Mammary epithelial cell (primary cell): ENCODE measurements at regions of chr11 and their contacts with region 1.

Region 1: GRCh38 chr11:118290923-118291322 is 13.6 kb upstream of the CD3E start:
- DNase-seq: peak; percentile 63
- H3K4me3 ChIP-seq: no peak overlapping the region
- H3K27ac ChIP-seq: no peak overlapping the region
- H3K4me1 ChIP-seq: peaks cover 30% of the 10 kb centered on the region
- H3K27me3 ChIP-seq: no peaks in the 10 kb centered on the region
- CTCF ChIP-seq: peak; percentile 67 to 68

Region 2: GRCh38 chr11:117716521-117717440 is 574.1 kb before region 1 on chr11:
- CTCF ChIA-PET with region 1: no interaction called
- dilution Hi-C with region 1: no loop called
- in situ Hi-C with region 1: no loop called
- intact Hi-C with region 1: no loop called
- DNase-seq: no peak
- H3K4me3 ChIP-seq: no peak overlapping the region
- H3K27ac ChIP-seq: no peak overlapping the region
- H3K4me1 ChIP-seq: no peaks in the 10 kb centered on the region
- H3K27me3 ChIP-seq: no peaks in the 10 kb centered on the region
- CTCF ChIP-seq: no peak

Region 3: DNA sequence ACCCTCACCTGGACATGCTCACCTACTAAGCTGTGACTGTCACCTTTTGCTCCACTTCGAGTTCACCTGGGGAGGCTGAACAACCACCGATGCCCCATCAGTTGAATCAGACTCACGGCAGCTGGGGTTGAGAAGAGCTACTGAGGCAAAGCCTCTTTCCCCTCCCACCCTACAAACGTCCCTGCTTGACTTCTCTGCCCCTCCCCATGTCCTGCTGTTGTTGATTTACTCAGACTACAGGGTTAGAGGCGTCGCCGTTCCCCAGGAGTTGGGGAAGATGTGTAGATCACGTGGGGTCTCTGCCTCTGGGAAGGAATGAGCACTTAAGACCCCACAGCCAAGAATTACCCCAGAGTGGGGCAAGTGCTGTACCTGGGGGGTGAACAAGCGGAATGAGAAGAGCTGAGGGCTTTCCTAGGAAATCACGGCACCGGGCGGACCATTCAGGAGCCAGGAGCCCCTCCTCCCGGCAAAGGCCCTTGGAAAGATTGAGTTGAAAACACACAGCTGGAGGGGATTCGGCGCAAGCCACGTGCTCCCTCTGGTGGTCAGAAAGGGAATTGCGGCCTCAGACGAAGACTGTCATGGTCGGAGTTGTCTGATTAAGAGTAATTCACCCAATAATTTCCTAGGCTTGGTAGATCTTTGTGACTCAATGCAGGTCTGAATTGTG is 473.4 kb before region 1 on chr11:
- CTCF ChIA-PET with region 1: interaction called, 3 read pairs
- dilution Hi-C with region 1: no loop called
- in situ Hi-C with region 1: no loop called
- intact Hi-C with region 1: loop called (anchors 10 kb)
- DNase-seq: peak; percentile 63
- H3K4me3 ChIP-seq: no peak overlapping the region
- H3K27ac ChIP-seq: no peak overlapping the region
- H3K4me1 ChIP-seq: peaks cover 10% of the 10 kb centered on the region
- H3K27me3 ChIP-seq: no peaks in the 10 kb centered on the region
- CTCF ChIP-seq: peak; percentile 99 to 100

Region 4: GRCh38 chr11:117979481-117980211 is 311.3 kb before region 1 on chr11:
- CTCF ChIA-PET with region 1: no interaction called
- dilution Hi-C with region 1: no loop called
- in situ Hi-C with region 1: no loop called
- intact Hi-C with region 1: no loop called
- DNase-seq: no peak
- H3K4me3 ChIP-seq: no peak overlapping the region
- H3K27ac ChIP-seq: no peak overlapping the region
- H3K4me1 ChIP-seq: no peaks in the 10 kb centered on the region
- H3K27me3 ChIP-seq: no peaks in the 10 kb centered on the region
- CTCF ChIP-seq: no peak

Region 5: GRCh38 chr11:118171269-118172062 is 119.5 kb before region 1 on chr11:
- CTCF ChIA-PET with region 1: no interaction called
- dilution Hi-C with region 1: no loop called
- in situ Hi-C with region 1: no loop called
- intact Hi-C with region 1: loop called (anchors 1 kb)
- DNase-seq: peak; percentile 37
- H3K4me3 ChIP-seq: no peak overlapping the region
- H3K27ac ChIP-seq: no peak overlapping the region
- H3K4me1 ChIP-seq: peaks cover 23% of the 10 kb centered on the region
- H3K27me3 ChIP-seq: no peaks in the 10 kb centered on the region
- CTCF ChIP-seq: peak; percentile 64 to 91

Region 6: GRCh38 chr11:118251858-118252652 is 38.9 kb before region 1 on chr11 and contains the start of gene MPZL3:
- CTCF ChIA-PET with region 1: no interaction called
- dilution Hi-C with region 1: no loop called
- in situ Hi-C with region 1: no loop called
- intact Hi-C with region 1: loop called (anchors 2 kb)
- DNase-seq: peak; percentile 98
- H3K4me3 ChIP-seq: peak within 1 kb of the TSS; percentile 58 to 81 (median 64)
- H3K27ac ChIP-seq: peak within 1 kb of the TSS; percentile 96
- H3K4me1 ChIP-seq: no peaks in the 10 kb centered on the region
- H3K27me3 ChIP-seq: no peaks in the 10 kb centered on the region
- CTCF ChIP-seq: peak in 1 of 2 donors; percentile 22
- total RNA-seq, gene MPZL3: 10.9 to 25.7 TPM

Region 7: GRCh38 chr11:118263695-118264567 is 27.0 kb before region 1 on chr11 and contains the start of gene MPZL2:
- CTCF ChIA-PET with region 1: no interaction called
- dilution Hi-C with region 1: no loop called
- in situ Hi-C with region 1: no loop called
- intact Hi-C with region 1: loop called (anchors 1 kb)
- DNase-seq: peak; percentile 98
- H3K4me3 ChIP-seq: peak within 1 kb of the TSS; percentile 59 to 91 (median 78)
- H3K27ac ChIP-seq: peak within 1 kb of the TSS; percentile 96
- H3K4me1 ChIP-seq: peaks cover 48% of the 10 kb centered on the region
- H3K27me3 ChIP-seq: no peaks in the 10 kb centered on the region
- CTCF ChIP-seq: peak in 1 of 2 donors; percentile 39
- total RNA-seq, gene MPZL2: 82.5 to 92.3 TPM

Region 8: DNA sequence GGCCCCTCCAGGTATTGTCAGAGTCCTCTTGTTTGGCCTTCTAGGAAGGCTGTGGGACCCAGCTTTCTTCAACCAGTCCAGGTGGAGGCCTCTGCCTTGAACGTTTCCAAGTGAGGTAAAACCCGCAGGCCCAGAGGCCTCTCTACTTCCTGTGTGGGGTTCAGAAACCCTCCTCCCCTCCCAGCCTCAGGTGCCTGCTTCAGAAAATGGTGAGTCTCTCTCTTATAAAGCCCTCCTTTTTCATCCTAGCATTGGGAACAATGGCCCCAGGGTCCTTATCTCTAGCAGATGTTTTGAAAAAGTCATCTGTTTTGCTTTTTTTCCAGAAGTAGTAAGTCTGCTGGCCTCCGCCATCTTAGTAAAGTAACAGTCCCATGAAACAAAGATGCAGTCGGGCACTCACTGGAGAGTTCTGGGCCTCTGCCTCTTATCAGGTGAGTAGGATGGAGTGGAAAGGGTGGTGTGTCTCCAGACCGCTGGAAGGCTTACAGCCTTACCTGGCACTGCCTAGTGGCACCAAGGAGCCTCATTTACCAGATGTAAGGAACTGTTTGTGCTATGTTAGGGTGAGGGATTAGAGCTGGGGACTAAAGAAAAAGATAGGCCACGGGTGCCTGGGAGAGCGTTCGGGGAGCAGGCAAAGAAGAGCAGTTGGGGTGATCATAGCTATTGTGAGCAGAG is 13.8 kb after region 1 on chr11 and contains the start of gene CD3E:
- CTCF ChIA-PET with region 1: no interaction called
- dilution Hi-C with region 1: no loop called
- in situ Hi-C with region 1: no loop called
- intact Hi-C with region 1: no loop called
- DNase-seq: no peak
- H3K4me3 ChIP-seq: no peak within 1 kb of the TSS
- H3K27ac ChIP-seq: no peak within 1 kb of the TSS
- H3K4me1 ChIP-seq: no peaks in the 10 kb centered on the region
- H3K27me3 ChIP-seq: no peaks in the 10 kb centered on the region
- CTCF ChIP-seq: no peak
- total RNA-seq, gene CD3E: not detected

Region 9: GRCh38 chr11:118359295-118359958 is 68.5 kb after region 1 on chr11 and contains the start of gene UBE4A:
- CTCF ChIA-PET with region 1: no interaction called
- dilution Hi-C with region 1: no loop called
- in situ Hi-C with region 1: loop called (anchors 10 kb)
- intact Hi-C with region 1: no loop called
- DNase-seq: peak; percentile 83
- H3K4me3 ChIP-seq: peak within 1 kb of the TSS; percentile 81 to 98 (median 86)
- H3K27ac ChIP-seq: peak within 1 kb of the TSS; percentile 71
- H3K4me1 ChIP-seq: peaks cover 9% of the 10 kb centered on the region
- H3K27me3 ChIP-seq: no peaks in the 10 kb centered on the region
- CTCF ChIP-seq: no peak
- total RNA-seq, gene UBE4A: 31.9 to 54.3 TPM